ENCODE measurements at regions of chr16 and their contacts with region 1.

Region 1: GRCh38 chr16:10895053-10895946 is 18.3 kb downstream of the CIITA start:
- DNase-seq: peak; percentile 52
- H3K4me3 ChIP-seq: no peak overlapping the region
- H3K27ac ChIP-seq: peak overlapping the region; percentile 50
- H3K4me1 ChIP-seq: peaks cover 71% of the 10 kb centered on the region
- CTCF ChIP-seq: no peak

Region 2: DNA sequence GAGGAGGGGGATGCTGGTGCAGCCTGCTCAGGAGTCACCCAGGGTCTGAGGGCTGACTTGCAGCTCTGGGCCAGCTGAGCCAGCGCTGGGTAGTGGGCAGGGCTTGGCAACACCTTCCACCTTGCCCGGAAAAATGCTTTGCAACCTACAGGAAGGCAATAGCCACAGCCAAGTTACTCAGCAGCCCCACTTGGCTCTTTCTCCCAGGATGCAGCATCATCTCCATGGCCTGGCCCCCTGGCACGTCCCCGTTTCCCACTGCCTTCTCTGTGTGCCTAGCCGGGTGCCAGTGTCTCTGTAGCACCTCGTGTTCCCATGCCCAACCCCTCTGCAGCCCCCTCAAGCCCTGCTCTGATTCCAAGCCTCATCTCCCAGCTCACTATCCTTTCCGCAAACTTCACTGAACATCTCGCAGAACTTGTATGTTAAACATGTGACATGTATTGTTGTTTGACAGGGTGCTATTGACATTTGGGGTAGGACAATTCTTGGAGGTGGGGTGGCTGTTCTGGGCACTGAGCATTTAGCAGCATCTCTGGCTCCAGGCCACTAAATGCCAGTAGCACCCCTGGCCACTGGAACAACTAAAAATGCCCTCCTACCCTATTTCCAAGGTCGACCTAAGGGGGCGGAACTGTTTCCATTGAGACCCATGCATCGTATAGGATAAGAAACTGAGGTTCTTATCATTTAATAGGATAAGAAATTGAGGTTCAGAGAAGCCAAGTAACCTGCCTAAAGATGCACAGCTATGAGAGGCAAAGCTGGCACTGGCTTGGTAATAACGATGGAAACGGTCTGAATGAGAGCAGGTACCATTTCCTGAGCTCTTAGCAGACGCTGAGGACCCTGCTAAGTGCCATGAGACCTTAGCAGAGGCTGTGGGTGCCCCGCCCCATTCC is 34.8 kb after region 1 on chr16:
- CTCF ChIA-PET with region 1: interaction called, 18 read pairs
- POLR2A ChIA-PET with region 1: no interaction called
- intact Hi-C with region 1: no loop called
- DNase-seq: no peak
- H3K4me3 ChIP-seq: no peak overlapping the region
- H3K27ac ChIP-seq: no peak overlapping the region
- H3K4me1 ChIP-seq: no peaks in the 10 kb centered on the region
- CTCF ChIP-seq: no peak